WTC11 (cell line): ENCODE measurements at regions of chr9 and their contacts with region 1.

Region 1: DNA sequence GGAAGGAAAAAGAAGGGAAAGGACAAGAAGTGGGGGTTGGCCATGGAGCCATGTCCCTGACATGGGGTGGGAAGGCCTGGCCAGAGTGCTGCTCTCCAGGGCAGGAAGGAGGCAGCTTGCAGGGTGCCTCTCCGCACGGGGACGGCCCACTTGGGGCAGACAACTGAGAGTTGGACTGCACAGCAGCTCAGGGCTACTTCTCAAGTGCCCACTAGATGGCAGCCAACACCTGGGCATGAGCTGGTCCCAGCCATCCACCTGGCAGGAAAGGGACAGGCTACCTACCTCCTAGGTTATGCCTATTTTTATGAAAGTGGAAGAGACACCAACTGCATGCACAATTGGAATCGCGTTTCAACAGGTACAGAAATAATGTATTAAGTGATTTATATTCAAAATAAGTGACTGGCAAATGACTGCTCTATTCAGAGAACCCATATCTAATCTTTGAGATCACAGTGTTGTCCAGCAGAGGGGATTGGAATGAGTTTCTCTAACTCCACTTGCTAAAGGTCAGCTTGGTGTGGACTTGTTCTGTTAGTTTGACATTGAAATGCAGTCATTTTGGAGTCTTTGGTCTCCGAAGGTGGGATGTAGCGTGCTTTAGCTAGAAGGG is 113.4 kb downstream of the SYK start:
- DNase-seq: peak; percentile 82
- ATAC-seq: peak; percentile 95
- H3K4me3 Mint-ChIP-seq: no peak overlapping the region
- H3K27ac Mint-ChIP-seq: no peak overlapping the region
- H3K4me1 Mint-ChIP-seq: no peaks in the 10 kb centered on the region
- H3K27me3 Mint-ChIP-seq: no peaks in the 10 kb centered on the region
- CTCF ChIP-seq: peak; percentile 86

Region 2: DNA sequence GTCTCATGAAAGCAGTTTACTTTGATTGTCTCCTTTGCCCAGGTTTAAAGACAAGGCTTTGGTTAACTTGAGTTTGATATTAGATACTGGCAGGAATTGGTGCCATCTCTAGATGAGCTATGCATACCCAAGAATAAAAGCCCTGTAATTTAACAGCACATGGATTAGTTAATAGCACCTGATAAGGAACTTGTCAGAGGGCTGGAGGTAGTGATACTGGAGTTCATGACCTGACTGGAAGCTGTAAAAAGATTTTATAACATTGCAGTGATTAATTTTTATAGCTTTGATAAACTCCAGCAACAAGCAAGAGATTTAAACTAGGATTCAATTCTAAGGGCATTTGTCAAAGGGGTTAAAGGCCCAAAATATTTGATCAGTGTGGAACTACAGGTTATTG is 148.2 kb before region 1 on chr9:
- CTCF ChIA-PET with region 1: no interaction called
- POLR2A ChIA-PET with region 1: no interaction called
- DNase-seq: no peak
- ATAC-seq: no peak
- H3K4me3 Mint-ChIP-seq: no peak overlapping the region
- H3K27ac Mint-ChIP-seq: no peak overlapping the region
- H3K4me1 Mint-ChIP-seq: no peaks in the 10 kb centered on the region
- H3K27me3 Mint-ChIP-seq: peaks cover 4% of the 10 kb centered on the region; the same call in 1 of the 2 replicates
- CTCF ChIP-seq: no peak

Region 3: DNA sequence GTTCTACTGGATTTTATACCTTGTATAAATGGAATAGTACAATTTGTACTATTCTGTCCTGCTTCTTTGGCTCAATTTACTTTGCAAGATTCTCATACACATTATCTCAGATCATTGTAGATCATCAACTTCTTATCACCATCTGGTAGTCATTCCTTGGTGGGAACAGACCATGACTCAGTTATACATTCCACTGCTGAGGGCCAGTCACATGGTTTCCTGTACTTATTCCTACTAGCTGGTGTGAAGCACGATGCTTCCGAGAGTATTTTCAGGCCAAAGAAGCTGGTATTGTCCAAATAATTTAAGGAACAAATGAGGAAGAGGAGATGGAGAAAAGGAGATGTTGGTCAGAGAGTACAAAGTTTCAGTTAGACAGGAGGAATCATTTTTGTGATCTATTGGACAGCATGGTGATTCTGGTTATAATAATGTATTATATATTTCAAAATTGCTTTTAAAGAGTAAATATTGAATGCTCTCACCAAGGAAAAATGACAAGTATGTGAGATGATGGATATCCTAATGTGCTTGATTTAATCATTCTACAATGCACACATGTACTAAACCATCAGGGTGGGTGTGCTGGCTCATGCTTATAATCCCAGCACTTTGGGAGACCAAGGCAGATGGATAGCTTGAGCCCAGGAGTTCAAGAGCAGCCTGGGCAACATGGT is 10.7 kb after region 1 on chr9:
- CTCF ChIA-PET with region 1: no interaction called
- POLR2A ChIA-PET with region 1: no interaction called
- DNase-seq: no peak
- ATAC-seq: no peak
- H3K4me3 Mint-ChIP-seq: no peak overlapping the region
- H3K27ac Mint-ChIP-seq: no peak overlapping the region
- H3K4me1 Mint-ChIP-seq: peaks cover 5% of the 10 kb centered on the region; the same call in 1 of the 2 replicates
- H3K27me3 Mint-ChIP-seq: no peaks in the 10 kb centered on the region
- CTCF ChIP-seq: no peak

Region 4: GRCh38 chr9:90950600-90950999 is 35.6 kb after region 1 on chr9:
- CTCF ChIA-PET with region 1: interaction called, 13 read pairs
- POLR2A ChIA-PET with region 1: no interaction called
- DNase-seq: no peak
- ATAC-seq: no peak
- H3K4me3 Mint-ChIP-seq: no peak overlapping the region
- H3K27ac Mint-ChIP-seq: no peak overlapping the region
- H3K4me1 Mint-ChIP-seq: peaks cover 25% of the 10 kb centered on the region
- H3K27me3 Mint-ChIP-seq: peaks cover 4% of the 10 kb centered on the region
- CTCF ChIP-seq: no peak

Region 5: DNA sequence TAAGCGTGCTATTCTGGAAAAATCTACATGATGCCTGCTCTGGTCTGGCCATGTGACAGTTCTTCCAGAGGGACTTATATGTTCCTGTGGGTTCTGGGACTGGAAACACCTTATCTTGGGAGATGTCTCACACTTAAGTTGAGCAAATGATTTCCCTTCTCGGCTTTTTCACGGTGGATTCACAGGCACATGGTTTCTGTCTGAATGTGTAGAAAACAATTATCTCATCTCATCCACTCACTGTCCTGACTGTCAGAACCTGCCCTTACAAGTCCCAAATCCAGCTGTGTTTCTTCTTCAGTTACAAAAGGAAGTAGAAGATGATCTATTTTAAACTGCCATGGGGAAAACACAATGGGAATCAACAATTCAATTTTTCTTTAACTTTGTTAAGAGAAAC is 70.7 kb after region 1 on chr9:
- CTCF ChIA-PET with region 1: interaction called, 24 read pairs
- POLR2A ChIA-PET with region 1: interaction called, 3 read pairs
- DNase-seq: no peak
- ATAC-seq: no peak
- H3K4me3 Mint-ChIP-seq: no peak overlapping the region
- H3K27ac Mint-ChIP-seq: no peak overlapping the region
- H3K4me1 Mint-ChIP-seq: peaks cover 9% of the 10 kb centered on the region
- H3K27me3 Mint-ChIP-seq: no peaks in the 10 kb centered on the region
- CTCF ChIP-seq: no peak

Region 6: GRCh38 chr9:91029650-91030361 is 114.8 kb after region 1 on chr9:
- CTCF ChIA-PET with region 1: interaction called, 33 read pairs
- POLR2A ChIA-PET with region 1: no interaction called
- DNase-seq: no peak
- ATAC-seq: peak; percentile 46
- H3K4me3 Mint-ChIP-seq: no peak overlapping the region
- H3K27ac Mint-ChIP-seq: no peak overlapping the region
- H3K4me1 Mint-ChIP-seq: peaks cover 3% of the 10 kb centered on the region
- H3K27me3 Mint-ChIP-seq: no peaks in the 10 kb centered on the region; the same call in 1 of the 2 replicates
- CTCF ChIP-seq: no peak

Region 7: GRCh38 chr9:91253488-91253887 is 338.5 kb after region 1 on chr9:
- CTCF ChIA-PET with region 1: interaction called, 12 read pairs
- POLR2A ChIA-PET with region 1: no interaction called
- DNase-seq: no peak
- ATAC-seq: peak; percentile 52; the same call in 1 of the 2 replicates
- H3K4me3 Mint-ChIP-seq: no peak overlapping the region
- H3K27ac Mint-ChIP-seq: no peak overlapping the region
- H3K4me1 Mint-ChIP-seq: no peaks in the 10 kb centered on the region
- H3K27me3 Mint-ChIP-seq: no peaks in the 10 kb centered on the region
- CTCF ChIP-seq: no peak